ENCODE measurements at regions of chr21 and their contacts with region 1.

Region 1: DNA sequence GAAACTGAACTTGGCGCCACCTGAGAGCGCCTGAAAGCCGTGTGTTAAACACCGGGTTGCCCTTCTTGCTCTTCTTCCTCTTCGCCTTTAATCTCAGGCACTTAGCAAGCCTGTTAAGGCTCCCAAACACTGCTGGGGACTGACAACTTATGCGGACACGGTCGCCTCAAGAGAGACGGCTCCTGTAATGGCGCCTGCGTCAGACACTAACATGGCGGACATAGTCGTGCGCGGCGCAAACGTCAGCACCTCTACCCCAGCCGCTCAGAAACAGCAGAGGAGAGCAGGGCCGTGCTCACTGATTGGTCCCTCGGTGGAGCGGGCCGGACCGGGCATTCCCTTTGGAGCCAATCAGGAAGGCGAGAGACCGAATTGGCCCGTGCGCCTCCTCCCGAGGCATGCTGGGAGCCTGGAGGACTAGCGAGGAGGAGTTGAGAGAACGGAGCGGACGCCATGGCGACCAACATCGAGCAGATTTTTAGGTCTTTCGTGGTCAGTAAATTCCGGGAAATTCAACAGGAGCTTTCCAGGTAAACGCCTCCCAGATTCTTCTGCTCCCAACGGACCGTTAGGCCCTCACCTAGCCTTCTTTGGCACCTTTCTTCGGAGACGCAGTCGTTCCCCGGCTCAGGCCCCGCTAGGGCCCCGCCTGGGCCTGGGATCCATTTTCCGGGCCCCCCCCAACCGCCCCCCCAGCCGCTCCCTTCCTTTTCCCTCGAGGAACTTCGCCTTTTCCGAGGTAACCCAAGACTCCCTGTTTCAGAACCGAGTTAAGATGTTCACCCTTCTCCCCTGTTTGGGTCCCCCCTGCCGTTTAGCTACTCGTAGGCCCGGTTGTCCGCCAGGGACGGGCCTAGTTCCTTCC is at the start of gene SON:
- DNase-seq: peak; percentile 98
- H3K4me3 ChIP-seq: peak within 1 kb of the TSS; percentile 99
- H3K27ac ChIP-seq: peak within 1 kb of the TSS; percentile 95
- H3K4me1 ChIP-seq: peaks cover 27% of the 10 kb centered on the region
- CTCF ChIP-seq: no peak
- total RNA-seq, gene SON: 243 and 335 TPM in 2 replicates

Region 2: GRCh38 chr21:32770871-32771523 is 771.9 kb before region 1 on chr21:
- CTCF ChIA-PET with region 1: no interaction called
- POLR2A ChIA-PET with region 1: no interaction called
- intact Hi-C with region 1: loop called (anchors 2 kb)
- DNase-seq: peak; percentile 83
- H3K4me3 ChIP-seq: peak overlapping the region; percentile 88
- H3K27ac ChIP-seq: peak overlapping the region; percentile 87
- H3K4me1 ChIP-seq: peaks cover 26% of the 10 kb centered on the region
- CTCF ChIP-seq: no peak

Region 3: GRCh38 chr21:33383056-33383888 is 159.6 kb before region 1 on chr21:
- CTCF ChIA-PET with region 1: no interaction called
- POLR2A ChIA-PET with region 1: no interaction called
- intact Hi-C with region 1: loop called (anchors 2 kb)
- DNase-seq: peak; percentile 96
- H3K4me3 ChIP-seq: peak overlapping the region; percentile 69
- H3K27ac ChIP-seq: peak overlapping the region; percentile 99
- H3K4me1 ChIP-seq: peaks cover 86% of the 10 kb centered on the region
- CTCF ChIP-seq: no peak; the same call in 1 of the 2 replicates

Region 4: DNA sequence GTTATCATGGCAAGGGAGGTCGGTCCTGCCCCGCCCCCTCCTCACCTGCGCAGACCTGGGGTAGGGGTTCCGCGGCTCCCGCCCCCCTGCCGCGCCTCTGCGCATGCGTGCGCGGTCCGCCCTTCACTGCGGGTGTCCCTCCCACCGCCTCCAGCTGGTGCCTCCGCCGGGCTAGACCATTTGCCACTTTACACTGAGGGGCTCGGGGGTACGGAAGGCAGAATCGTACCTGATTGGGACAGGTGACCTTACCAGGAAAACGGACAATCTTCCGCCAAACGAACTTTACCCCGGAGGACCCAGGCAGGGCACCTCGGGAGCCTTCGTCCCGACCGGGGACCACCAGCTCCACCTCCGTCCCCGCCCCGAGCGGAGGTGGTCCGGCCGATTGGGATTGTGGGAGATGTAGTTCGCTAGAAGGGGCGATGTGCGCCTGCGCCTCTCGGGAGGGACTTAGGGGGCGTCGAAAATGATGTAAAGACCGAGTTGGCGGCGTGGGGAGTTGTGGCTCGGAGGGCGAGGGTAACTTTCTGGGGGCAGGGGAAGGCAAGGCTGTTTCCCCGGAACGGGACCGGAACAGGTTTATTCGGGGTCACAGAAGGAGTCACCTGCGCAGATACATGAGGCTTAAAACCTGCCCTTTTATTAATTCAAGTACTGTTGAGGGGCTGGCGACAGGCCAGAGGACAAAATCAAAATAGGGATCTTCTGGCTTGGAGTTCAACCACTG is 51.3 kb before region 1 on chr21 and contains the start of gene DNAJC28:
- CTCF ChIA-PET with region 1: interaction called, 3 read pairs
- POLR2A ChIA-PET with region 1: interaction called, 6 read pairs
- intact Hi-C with region 1: loop called (anchors 5 kb)
- DNase-seq: peak; percentile 96
- H3K4me3 ChIP-seq: peak within 1 kb of the TSS; percentile 72
- H3K27ac ChIP-seq: peak within 1 kb of the TSS; percentile 13
- H3K4me1 ChIP-seq: peaks cover 11% of the 10 kb centered on the region
- CTCF ChIP-seq: no peak
- total RNA-seq, gene DNAJC28: 0.44 and 1.3 TPM in 2 replicates

Region 5: GRCh38 chr21:33588485-33589335 is 45.8 kb after region 1 on chr21 and contains the start of gene DONSON:
- CTCF ChIA-PET with region 1: no interaction called
- POLR2A ChIA-PET with region 1: interaction called, 5 read pairs
- intact Hi-C with region 1: loop called (anchors 2 kb)
- DNase-seq: peak; percentile 90
- H3K4me3 ChIP-seq: peak within 1 kb of the TSS; percentile 83
- H3K27ac ChIP-seq: peak within 1 kb of the TSS; percentile 37
- H3K4me1 ChIP-seq: peaks cover 8% of the 10 kb centered on the region
- CTCF ChIP-seq: 0 out of 2 replicates have a peak, but pooled peaks have one; percentile 14
- total RNA-seq, gene DONSON: 35.8 and 48.4 TPM in 2 replicates

Measured in OCI-LY7 (cell line).